T-cell (primary cell): ENCODE measurements at regions of chr18 and their contacts with region 1.

Region 1: DNA sequence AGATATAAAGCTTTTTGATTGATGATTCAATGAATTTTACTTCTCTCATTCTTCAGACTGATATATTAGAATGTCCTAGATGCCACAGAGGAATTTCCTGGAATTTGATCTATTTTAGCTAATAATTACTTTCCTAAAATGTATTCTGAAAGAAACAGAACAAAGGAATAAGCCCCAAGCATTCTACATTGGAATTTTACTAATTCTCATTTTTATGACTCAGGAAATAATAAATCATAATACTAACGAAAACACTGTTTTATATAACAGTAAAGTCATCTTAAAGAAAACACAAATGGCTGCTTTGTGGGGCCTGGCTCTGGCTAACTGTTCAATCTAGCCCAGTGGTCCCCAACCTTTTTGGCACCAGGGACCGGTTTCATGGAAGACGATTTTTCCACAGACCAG is 68.6 kb upstream of the LPIN2 start:
- DNase-seq: no peak
- ATAC-seq: no peak
- H3K4me3 ChIP-seq: no peak overlapping the region
- H3K4me3 Mint-ChIP-seq: no peak overlapping the region
- H3K27ac ChIP-seq: no peak overlapping the region
- H3K27ac Mint-ChIP-seq: no peak overlapping the region
- H3K4me1 ChIP-seq: no peaks in the 10 kb centered on the region
- H3K4me1 Mint-ChIP-seq: no peaks in the 10 kb centered on the region
- H3K27me3 ChIP-seq: no peaks in the 10 kb centered on the region
- H3K27me3 Mint-ChIP-seq: no peaks in the 10 kb centered on the region

Region 2: GRCh38 chr18:3093624-3094337 is 12.2 kb after region 1 on chr18:
- CTCF ChIA-PET with region 1: no interaction called
- POLR2A ChIA-PET with region 1: no interaction called
- DNase-seq: no peak
- ATAC-seq: no peak
- H3K4me3 ChIP-seq: no peak overlapping the region
- H3K4me3 Mint-ChIP-seq: no peak overlapping the region
- H3K27ac ChIP-seq: no peak overlapping the region
- H3K27ac Mint-ChIP-seq: no peak overlapping the region
- H3K4me1 ChIP-seq: peaks cover 9 to 15% of the 10 kb centered on the region in 2 experiments
- H3K4me1 Mint-ChIP-seq: peaks cover 17 to 33% (median 24%) of the 10 kb centered on the region in 3 donors
- H3K27me3 ChIP-seq: no peaks in the 10 kb centered on the region
- H3K27me3 Mint-ChIP-seq: no peaks in the 10 kb centered on the region

Region 3: DNA sequence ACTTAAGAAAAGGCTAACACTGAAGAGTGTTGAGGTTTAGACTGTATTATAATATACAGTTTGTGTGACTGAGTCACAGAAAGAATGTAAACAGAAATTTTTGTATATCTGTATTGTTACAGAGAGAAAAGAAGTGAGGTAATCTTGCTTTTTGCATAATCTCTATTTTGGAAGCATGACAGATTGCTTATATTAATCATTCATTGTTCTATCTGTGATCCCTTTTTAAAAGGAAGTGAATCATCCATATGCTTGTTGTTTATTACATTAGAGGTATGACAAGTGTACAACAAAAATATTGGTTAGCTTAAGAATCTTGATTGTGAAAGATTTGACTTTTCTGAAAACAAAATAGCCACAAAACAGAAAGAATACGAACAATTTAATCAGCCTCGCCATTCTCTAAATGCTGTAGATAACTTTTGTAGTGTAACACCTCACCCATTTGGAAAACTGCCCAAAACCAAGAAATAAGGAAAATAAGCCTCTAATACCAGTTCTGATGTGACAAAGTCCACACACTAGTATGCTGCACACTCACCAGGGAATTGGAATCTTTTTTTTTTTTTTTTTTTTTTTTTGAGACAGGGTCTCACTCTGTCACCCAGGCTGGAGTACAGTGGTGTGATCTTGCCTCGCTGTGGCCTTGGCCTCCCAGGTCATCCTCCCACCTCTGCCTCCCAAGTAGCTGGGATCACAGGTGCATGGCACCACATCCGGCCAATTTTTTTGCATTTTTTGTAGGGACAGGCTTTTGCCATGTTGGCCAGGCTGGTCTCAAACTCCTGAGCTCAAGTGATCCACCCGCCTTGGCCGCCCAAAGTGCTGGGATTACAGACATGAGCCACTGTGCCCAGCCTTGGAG is 22.8 kb after region 1 on chr18:
- CTCF ChIA-PET with region 1: interaction called in 1 of 2 experiments, 3 read pairs
- POLR2A ChIA-PET with region 1: interaction called in 1 of 2 experiments, 12 read pairs
- DNase-seq: no peak
- ATAC-seq: no peak
- H3K4me3 ChIP-seq: no peak overlapping the region
- H3K4me3 Mint-ChIP-seq: no peak overlapping the region
- H3K27ac ChIP-seq: no peak overlapping the region
- H3K27ac Mint-ChIP-seq: no peak overlapping the region
- H3K4me1 ChIP-seq: no peaks in the 10 kb centered on the region
- H3K4me1 Mint-ChIP-seq: peaks cover 3 to 6% (median 3%) of the 10 kb centered on the region in 3 donors
- H3K27me3 ChIP-seq: no peaks in the 10 kb centered on the region
- H3K27me3 Mint-ChIP-seq: no peaks in the 10 kb centered on the region

Region 4: DNA sequence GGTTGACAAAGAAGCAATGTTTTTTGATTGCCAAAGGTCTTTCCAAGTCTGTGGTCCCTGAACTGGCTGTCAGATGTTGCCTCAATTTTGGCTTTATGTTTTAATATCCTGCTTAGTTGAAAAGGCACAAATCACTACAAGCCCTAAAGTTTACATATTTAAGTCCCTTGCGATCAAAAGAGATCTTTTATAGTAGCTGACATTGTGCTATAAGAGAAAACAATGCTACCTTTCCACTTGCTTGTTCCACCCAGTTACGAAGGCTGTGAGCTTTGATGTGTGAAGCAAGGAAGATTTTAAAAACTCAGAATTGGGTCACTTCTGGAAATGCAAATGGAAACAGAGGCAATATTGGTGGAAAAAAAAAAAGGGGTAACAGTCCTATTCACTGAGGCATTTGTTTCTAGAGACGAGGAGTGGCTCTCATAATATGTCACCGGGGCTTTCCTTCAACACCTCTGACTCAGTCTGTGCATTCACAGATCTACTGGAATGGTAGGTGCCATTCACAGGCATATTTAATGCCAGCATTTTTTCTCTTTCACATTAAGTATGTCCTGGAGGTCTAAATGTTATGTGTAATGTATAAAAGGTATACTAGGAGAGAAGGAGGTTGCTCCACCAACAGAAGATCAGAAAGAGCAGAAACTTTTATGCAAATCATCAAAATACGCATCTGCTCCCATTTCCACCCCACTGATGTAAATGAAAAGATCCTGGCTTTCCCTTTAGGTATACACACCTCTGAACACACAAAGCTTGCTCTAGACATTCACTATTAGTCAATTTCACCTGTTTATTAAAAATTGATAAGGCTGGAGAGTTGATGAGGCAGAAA is 460.2 kb after region 1 on chr18:
- CTCF ChIA-PET with region 1: no interaction called
- POLR2A ChIA-PET with region 1: no interaction called
- DNase-seq: no peak
- ATAC-seq: no peak
- H3K4me3 ChIP-seq: no peak overlapping the region
- H3K4me3 Mint-ChIP-seq: no peak overlapping the region
- H3K27ac ChIP-seq: no peak overlapping the region
- H3K27ac Mint-ChIP-seq: no peak overlapping the region
- H3K4me1 ChIP-seq: no peaks in the 10 kb centered on the region
- H3K4me1 Mint-ChIP-seq: no peaks in the 10 kb centered on the region
- H3K27me3 ChIP-seq: no peaks in the 10 kb centered on the region
- H3K27me3 Mint-ChIP-seq: peaks cover 0 to 3% of the 10 kb centered on the region in 2 donors